Right ventricle myocardium inferior (tissue), 1 donor: ENCODE measurements at regions of chr2 and their contacts with region 1.

Region 1: GRCh38 chr2:66429071-66429477 is 5.9 kb upstream of the MEIS1 start:
- DNase-seq: no peak
- ATAC-seq: no peak

Region 2: DNA sequence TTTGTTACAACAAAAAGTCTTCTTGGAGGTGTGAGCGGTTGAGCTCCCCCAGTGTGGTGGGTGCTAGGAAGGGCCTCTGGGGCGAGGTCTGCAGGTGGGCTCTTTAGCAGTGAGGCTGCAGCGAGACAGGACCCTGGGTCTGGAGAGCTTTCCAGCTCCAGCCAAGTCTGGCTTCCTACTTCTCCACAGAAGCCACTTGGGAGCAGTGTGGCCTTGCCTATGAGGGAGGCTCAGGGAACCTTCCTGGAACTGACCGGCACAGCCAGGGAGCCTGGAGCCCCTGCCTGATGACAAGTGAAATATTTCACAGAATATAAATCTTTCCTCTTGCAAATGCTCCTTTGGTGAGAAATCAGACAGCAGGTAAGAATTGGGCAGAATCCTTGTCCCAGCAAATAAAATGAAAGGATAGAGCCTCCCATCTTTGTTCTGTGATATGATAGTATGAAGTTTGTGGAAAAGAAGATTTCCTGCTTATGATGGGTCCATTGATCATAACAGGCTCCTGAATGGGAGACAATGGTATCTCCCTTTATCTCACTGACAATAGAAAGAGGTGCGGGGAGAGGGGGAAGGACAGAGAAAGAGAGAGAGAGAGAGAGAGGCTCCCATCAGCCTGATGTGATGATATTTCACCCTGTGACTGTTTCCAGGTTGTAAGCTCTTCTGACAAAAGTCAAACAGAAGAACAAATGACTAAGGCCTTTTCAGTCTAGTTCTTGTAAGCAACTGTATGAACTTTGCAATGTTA is 706.9 kb before region 1 on chr2:
- intact Hi-C with region 1: loop called (anchors 5 kb)
- DNase-seq: peak; percentile 68
- ATAC-seq: peak; percentile 94

Region 3: GRCh38 chr2:68031542-68032160 is 1602.6 kb after region 1 on chr2:
- intact Hi-C with region 1: loop called (anchors 10 kb)
- DNase-seq: no peak
- ATAC-seq: no peak